ENCODE measurements at regions of chr20 and their contacts with region 1.

Region 1: GRCh38 chr20:43955062-43955749 is 40.6 kb downstream of the TOX2 start:
- DNase-seq: peak; percentile 96
- ATAC-seq: peak; percentile 92
- H3K4me3 ChIP-seq: no peak overlapping the region; the same call in 1 of the 2 replicates
- H3K27ac ChIP-seq: peak overlapping the region; percentile 72
- H3K4me1 ChIP-seq: peaks cover 33% of the 10 kb centered on the region
- H3K27me3 ChIP-seq: no peaks in the 10 kb centered on the region
- CTCF ChIP-seq: no peak

Region 2: DNA sequence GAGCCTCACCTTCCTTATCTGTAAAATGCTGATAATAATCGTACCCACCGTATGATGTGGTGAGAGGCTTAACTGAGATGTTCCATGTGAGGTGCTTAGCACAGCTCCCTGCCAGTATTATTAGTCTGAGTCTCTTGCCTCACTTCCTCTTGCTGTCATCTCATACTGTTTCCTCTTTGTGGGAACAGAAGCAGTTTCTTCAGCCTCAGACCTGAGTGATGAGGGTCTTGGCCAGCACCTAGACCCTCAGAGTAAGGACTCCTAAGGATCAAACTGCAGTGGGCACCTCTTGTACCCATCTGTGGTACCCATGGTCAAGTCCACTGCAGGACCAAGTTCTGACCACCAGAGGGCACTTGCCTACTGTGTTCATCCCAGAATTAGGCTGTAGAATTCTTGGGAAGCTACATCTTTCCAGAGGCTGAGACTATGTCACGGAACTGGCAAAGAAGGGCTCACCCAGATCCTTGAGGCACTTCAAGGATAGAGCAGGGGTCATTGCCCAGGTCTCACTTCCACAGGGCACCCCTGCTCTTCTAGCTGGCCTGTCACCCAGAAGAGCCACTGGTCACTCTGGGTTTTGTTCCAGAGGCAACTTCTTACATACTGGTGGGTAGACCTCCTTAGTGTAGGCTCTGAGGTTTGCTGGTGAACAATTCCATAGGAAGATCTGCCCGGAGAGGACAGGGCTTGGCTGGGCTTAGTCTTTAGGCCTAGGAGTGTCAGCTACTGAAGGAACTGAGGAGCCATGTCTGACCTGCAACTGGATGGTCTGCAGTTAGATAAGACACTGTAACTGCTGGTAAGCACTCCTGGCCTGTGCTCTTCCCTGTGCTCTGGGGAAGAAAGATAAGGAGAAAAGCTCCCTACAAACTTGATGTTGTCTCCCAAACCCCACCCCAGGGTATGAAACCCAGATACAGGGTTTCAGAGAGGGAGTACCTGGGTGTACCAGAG is 417.0 kb before region 1 on chr20:
- CTCF ChIA-PET with region 1: no interaction called
- POLR2A ChIA-PET with region 1: no interaction called
- intact Hi-C with region 1: no loop called
- DNase-seq: peak; percentile 86
- ATAC-seq: peak; percentile 68
- H3K4me3 ChIP-seq: no peak overlapping the region
- H3K27ac ChIP-seq: no peak overlapping the region
- H3K4me1 ChIP-seq: peaks cover 18% of the 10 kb centered on the region
- H3K27me3 ChIP-seq: no peaks in the 10 kb centered on the region
- CTCF ChIP-seq: peak; percentile 99

Region 3: GRCh38 chr20:43975096-43975768 is 20.0 kb after region 1 on chr20:
- CTCF ChIA-PET with region 1: no interaction called
- POLR2A ChIA-PET with region 1: no interaction called
- intact Hi-C with region 1: loop called (anchors 1 kb)
- DNase-seq: peak; percentile 94
- ATAC-seq: peak; percentile 94
- H3K4me3 ChIP-seq: no peak overlapping the region
- H3K27ac ChIP-seq: peak overlapping the region; percentile 72
- H3K4me1 ChIP-seq: peaks cover 16% of the 10 kb centered on the region
- H3K27me3 ChIP-seq: no peaks in the 10 kb centered on the region
- CTCF ChIP-seq: no peak

Measured in PC-3 (cell line).